ENCODE measurements at regions of chr4 and their contacts with region 1.

Region 1: DNA sequence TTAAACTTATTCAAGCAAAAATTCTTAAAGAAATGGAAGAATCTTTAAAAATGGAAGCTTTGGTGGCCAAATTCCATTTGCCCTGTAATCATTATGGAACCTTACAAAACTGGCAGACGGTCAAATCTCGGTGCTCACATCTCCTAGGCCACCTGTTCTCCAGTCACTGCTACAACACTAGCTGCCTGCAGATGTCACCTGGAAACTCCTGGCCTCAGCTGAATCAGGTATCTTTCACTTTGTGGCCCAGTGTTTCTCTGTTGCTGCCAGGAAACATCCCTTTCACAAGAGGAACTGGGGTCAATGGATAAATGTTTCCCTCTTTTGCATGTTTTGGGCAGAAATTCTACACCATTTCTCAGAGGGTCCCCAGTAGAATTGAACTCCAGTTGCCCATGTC is 4.2 kb upstream of the CXCL3 start:
- DNase-seq: peak in 2 of 6 donors; percentile 9 to 21
- ATAC-seq: peak in 1 of 4 donors; percentile 34
- H3K4me3 ChIP-seq: no peak overlapping the region
- H3K27ac ChIP-seq: no peak overlapping the region
- H3K4me1 ChIP-seq: no peaks in the 10 kb centered on the region
- H3K27me3 ChIP-seq: no peaks in the 10 kb centered on the region
- CTCF ChIP-seq: no peak

Region 2: DNA sequence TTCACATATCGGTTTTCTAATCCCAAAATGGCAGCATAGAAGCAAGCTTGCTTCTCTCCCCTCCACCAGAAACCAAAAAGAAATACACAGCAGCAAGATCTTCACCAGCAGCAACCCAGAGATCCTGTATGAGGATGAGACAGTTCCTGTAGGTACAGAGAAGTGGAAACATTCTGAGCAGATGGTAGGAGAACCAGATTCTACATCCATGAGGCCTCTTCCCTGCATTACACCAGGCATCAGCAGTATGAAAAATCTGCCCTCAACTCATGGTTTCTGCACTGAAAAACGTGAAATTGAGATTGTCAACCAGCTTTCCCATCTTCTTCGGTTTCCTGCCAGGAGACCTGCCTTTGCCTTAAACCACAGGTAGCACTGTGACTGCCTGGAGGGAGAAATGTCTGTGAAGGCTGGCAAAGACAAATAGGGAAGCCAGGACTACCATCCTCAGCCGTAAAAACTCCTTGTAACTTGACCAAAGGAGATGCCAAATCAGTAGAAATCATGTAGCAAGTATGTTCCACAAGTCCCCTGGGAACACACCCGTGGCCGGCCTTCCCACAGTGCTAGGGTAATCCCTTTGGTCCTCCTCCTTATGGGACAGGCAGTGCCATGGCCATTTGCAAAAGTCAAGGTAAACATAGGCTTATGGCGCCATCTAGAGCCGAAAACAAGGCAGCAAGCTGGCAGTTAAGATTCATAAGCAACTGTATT is 91.3 kb after region 1 on chr4:
- intact Hi-C with region 1: loop called in 1 of 3 experiments (anchors 10 kb)
- DNase-seq: peak; percentile 67 to 87 (median 76)
- ATAC-seq: peak; percentile 95 to 100 (median 100)
- H3K4me3 ChIP-seq: no peak overlapping the region
- H3K27ac ChIP-seq: peak overlapping the region in 1 of 4 donors; percentile 36
- H3K4me1 ChIP-seq: peaks cover 0 to 10% (median 7%) of the 10 kb centered on the region in 3 donors
- H3K27me3 ChIP-seq: no peaks in the 10 kb centered on the region
- CTCF ChIP-seq: peak; percentile 62 to 75 (median 64)

Region 3: GRCh38 chr4:74157561-74158465 is 115.1 kb after region 1 on chr4 and contains the start of gene MTHFD2L:
- intact Hi-C with region 1: no loop called
- DNase-seq: peak; percentile 95 to 98 (median 96)
- ATAC-seq: peak; percentile 96 to 98 (median 98)
- H3K4me3 ChIP-seq: peak within 1 kb of the TSS; percentile 36 to 64 (median 52)
- H3K27ac ChIP-seq: peak within 1 kb of the TSS; percentile 80 to 94 (median 88)
- H3K4me1 ChIP-seq: peaks cover 5 to 18% (median 14%) of the 10 kb centered on the region in 3 donors
- H3K27me3 ChIP-seq: no peaks in the 10 kb centered on the region
- CTCF ChIP-seq: no peak
- total RNA-seq, gene MTHFD2L: 4.9 to 8.0 (median 6.5) TPM

Region 4: DNA sequence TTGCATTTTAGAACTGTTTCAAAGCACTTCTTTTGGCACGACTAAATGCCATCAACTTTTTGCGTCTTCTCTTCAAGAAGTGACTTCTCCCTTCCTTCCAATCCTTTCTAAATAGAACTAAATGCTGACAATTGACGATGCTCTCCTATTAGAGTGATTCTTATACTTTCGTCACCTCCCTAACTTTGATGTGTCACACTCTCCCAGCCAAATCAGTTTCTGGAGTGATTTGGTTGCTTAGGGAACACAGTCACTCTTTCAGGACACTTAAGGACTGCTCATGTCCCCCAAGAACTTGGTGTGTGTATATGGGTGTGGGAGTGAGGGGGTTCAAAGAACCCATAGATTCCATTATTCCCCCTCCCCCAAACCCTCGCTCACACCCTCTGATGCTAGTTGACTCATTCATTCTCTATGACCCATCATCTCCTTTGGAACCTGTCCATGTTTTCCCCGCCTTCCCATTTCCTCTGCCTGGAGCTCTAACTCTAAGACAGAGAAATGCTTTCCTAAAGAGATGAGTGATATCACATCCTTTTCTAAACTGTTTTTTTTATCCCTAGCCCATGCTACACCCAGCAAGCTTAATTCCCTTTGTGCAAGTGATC is 375.5 kb after region 1 on chr4:
- intact Hi-C with region 1: no loop called
- DNase-seq: no peak
- ATAC-seq: no peak
- H3K4me3 ChIP-seq: no peak overlapping the region
- H3K27ac ChIP-seq: no peak overlapping the region
- H3K4me1 ChIP-seq: no peaks in the 10 kb centered on the region
- H3K27me3 ChIP-seq: no peaks in the 10 kb centered on the region
- CTCF ChIP-seq: no peak